ENCODE measurements at regions of chr16 and their contacts with region 1.

Region 1: GRCh38 chr16:77599793-77600415 is 122.4 kb upstream of the NUDT7 start:
- DNase-seq: peak; percentile 46
- H3K4me3 Mint-ChIP-seq: no peak overlapping the region
- H3K27ac Mint-ChIP-seq: no peak overlapping the region
- H3K4me1 Mint-ChIP-seq: no peaks in the 10 kb centered on the region
- H3K27me3 Mint-ChIP-seq: peaks cover 18% of the 10 kb centered on the region

Region 2: DNA sequence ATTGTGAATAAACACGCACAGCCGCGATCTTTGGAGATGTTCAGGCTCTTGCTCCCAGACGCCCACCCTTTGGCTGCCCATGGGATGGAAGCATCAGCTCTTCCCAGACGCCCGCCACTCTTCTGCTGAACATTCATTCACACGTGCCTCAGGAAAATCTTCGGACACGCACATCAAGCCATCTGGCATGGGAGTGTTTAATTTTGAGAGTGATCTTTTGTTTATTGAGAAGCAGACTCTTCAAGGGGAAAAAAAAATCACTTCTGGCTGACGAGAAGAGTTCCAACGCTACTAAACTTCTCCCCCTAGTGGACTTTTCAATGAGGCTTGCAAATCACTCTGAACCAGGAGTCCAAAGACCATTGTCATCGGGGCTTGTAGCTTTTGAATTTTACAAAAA is 60.4 kb after region 1 on chr16:
- CTCF ChIA-PET with region 1: no interaction called
- intact Hi-C with region 1: loop called (anchors 1 kb)
- DNase-seq: no peak
- H3K4me3 Mint-ChIP-seq: no peak overlapping the region
- H3K27ac Mint-ChIP-seq: no peak overlapping the region
- H3K4me1 Mint-ChIP-seq: no peaks in the 10 kb centered on the region
- H3K27me3 Mint-ChIP-seq: peaks cover 33% of the 10 kb centered on the region